Left colon (tissue), 2 donors: ENCODE measurements at regions of chr11 and their contacts with region 1.

Region 1: DNA sequence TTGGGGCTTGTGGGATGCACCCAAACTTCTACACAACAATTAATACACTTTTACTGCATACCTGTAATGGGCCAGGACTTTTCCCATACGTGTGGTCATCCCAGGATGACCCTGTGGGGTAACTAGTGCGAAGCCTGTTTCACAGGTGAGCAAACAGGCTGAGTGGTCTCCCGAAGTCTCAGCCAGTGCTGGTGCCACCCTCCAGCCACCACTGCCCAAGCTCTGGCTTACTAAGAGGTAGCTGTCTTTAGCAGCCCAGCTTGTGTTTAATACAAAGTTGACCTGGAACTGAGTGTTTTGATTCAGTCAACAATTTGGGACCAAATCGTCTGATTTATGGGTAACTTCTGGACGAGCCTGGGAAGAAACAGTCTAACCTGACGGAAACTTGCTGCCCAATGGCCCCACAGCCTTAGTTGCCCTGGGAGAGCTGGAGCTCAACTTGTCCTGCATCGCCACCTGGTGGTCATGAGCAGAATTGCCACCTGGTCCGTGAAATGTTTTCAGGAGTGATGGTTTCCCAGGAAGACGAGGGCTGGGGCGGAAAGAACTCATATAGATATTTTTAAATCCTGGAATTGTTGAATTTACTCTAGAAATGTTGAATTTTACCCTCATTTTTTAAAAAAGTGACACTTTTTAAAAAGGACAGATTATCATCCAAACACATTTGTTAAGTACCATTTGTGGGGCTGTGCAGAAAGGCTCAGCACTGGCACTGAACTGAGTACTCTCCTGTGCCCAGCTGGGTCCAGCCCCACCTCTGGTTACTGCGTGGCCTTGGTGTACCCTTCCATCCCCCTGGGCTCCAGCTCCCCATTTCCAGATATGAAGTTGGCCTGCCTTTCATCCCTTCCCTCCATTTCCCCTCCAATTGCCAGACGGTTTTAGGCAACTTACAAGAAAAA is 95.5 kb upstream of the PARVA start:
- DNase-seq: peak; percentile 70 to 83
- ATAC-seq: peak; percentile 68

Region 2: GRCh38 chr11:11806586-11806985 is 475.2 kb before region 1 on chr11:
- intact Hi-C with region 1: loop called in 1 of 2 experiments (anchors 10 kb)
- DNase-seq: no peak
- ATAC-seq: no peak

Region 3: DNA sequence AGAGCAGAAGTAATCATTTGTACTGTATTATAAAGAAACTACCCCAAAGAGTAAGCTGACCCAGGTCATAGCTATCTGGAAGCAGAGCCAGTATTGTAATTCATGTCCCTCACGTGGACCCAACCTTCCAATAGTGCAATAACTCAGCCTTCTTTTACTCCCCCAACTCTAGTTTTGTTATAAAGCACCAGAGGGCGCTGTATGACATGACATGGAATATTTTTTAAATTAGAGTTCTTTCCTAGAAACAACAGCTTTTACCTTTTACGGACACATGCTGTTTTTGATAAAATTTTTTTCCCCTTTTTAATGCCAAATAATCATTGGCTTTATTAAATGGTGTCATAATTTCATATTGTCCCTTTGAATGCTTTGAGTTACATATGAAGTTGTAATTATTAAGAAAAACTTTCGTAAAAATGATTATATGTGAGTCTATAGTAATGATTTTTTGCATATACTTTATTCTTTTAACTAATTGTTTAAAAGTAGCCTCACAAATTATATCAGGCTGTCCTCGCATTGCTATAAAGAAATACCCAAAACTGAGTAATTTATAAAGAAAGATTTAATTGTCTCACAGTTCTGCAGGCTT is 350.3 kb before region 1 on chr11:
- intact Hi-C with region 1: loop called in 1 of 2 experiments (anchors 10 kb)
- DNase-seq: no peak
- ATAC-seq: peak; percentile 64

Region 4: DNA sequence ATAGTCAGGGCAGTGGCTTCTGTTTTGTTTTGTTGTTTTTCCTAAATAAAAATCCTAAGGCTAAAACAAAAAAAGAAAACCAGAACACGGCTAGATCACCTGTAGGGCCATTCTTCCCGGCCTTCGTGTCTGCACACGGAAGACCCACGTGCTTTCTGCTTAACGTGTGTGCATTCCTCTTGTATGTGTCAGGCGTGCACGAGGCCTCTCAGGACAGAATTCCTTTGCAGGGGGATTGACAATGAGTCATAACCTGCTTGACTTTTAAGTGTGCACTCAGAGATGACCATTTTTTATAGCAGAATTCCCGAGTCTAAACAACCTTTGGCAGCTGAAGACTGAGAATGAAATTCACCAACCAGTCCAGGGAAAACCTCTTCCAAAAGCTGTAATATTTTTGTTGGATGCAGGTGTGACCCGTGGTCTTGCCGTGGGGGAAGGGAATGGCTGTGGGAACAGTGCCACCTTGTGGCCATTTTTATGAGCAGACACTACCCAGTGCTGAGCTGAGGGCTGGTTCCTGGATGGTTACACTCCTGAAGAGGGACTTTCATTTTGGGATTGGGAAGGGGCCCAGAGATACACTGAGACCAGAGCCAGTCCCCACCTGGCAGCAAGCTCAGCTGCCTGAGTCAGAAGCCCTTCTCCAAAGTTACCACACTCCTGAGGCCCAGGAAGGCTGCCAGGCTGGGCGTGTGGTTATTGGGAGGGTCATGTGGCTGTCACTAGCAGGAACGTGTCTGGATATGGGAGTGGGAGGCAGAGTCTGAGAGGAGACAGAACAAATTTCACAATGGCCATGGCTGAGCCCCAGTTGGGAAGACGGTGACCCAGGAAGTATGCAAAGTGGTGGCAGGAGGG is 237.6 kb before region 1 on chr11:
- intact Hi-C with region 1: loop called (anchors 2 to 5 kb)
- DNase-seq: peak; percentile 61 to 76
- ATAC-seq: peak; percentile 81

Region 5: GRCh38 chr11:12331239-12331874 is 49.5 kb after region 1 on chr11:
- intact Hi-C with region 1: no loop called
- DNase-seq: peak; percentile 75 to 89
- ATAC-seq: peak; percentile 84